ENCODE measurements at regions of chr16 and their contacts with region 1.

Region 1: DNA sequence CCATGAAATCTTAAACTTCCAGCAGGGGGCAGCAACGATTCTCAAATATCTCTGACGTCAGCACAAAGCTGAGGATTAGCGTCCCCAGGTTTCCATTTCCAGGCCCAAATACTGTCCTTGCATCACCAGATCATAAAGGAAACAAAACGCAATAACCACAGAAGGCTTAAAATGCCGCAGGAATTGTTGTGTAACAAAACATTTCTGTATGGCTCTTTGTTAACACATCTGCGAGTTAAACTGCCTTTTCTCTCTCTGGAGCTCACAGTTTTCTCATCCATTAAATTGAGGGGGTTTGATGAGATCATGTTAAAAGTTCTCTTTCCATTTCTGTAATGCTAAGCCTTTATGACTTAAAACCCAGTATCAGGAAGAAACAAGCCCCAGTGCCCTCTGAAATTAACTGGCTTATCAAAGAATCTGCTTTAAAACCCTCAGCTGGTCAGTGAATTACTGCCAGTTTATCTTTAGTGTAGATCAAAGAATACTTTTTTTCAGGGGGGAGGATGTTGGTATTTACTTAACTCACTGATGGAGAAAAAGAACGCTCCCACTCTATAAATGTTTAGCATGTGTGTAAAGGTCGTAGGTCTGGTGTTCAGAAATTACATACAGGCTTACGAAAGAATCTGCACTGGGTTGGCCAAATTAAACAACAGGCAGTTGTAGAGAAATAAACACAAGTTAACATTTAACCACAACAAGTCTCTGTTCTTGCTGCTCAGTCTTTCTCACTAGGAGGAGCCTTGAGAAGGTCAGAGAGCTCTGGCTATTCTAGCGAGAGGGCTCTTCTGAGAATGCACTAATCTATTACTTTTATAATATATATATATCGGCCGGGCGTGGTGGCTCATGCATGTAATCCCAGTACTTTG is 10.6 kb upstream of the TERF2 start:
- DNase-seq: peak; percentile 90
- H3K4me3 ChIP-seq: no peak overlapping the region
- H3K27ac ChIP-seq: peak overlapping the region; percentile 65
- H3K4me1 ChIP-seq: peaks cover 18% of the 10 kb centered on the region
- H3K27me3 ChIP-seq: no peaks in the 10 kb centered on the region
- CTCF ChIP-seq: peak; percentile 55 to 57

Region 2: DNA sequence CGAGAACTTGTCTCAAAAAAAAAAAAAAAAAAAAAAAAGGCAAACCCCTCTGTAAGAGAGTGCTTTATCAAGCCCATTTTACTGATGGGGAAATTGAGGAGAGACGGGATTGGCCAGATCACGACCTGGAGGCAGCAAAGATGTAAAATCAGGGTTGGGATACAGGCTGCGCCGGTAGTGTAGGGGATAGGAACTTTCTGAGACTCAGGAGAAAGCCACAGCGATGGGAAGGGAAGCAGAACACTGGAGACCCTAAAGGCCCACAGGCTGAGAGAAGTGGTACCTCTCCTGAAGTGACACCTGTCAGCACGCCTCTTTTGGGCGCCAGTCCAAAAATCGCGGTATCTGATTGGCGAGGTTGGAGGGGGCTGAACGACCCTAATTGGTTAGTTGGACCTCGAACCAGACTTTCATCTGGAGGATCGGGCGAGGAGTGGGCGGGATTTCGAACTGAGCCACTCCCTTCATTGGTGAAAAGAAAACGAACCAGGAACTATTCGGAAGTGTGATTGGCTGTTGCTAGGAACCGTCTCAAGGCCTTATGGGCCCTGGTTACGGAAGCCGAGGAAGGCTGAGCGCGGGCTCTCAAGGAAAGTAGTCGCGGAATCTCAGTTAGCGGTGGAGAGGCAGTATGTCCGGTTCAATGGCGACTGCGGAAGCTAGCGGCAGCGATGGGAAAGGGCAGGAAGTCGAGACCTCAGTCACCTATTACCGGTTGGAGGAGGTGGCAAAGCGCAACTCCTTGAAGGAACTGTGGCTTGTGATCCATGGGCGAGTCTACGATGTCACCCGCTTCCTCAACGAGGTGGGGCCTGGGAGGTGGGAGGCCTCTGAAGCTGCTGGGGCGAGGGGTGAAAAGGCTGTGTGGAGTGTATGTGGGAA is 27.9 kb after region 1 on chr16 and contains the start of gene CYB5B:
- CTCF ChIA-PET with region 1: no interaction called
- dilution Hi-C with region 1: no loop called
- in situ Hi-C with region 1: no loop called
- intact Hi-C with region 1: loop called (anchors 1 kb)
- DNase-seq: peak; percentile 98
- H3K4me3 ChIP-seq: peak within 1 kb of the TSS; percentile 78 to 100 (median 85)
- H3K27ac ChIP-seq: peak within 1 kb of the TSS; percentile 77
- H3K4me1 ChIP-seq: no peaks in the 10 kb centered on the region
- H3K27me3 ChIP-seq: no peaks in the 10 kb centered on the region
- CTCF ChIP-seq: peak; percentile 1 to 10
- total RNA-seq, gene CYB5B: 96.5 to 174 TPM

Region 3: DNA sequence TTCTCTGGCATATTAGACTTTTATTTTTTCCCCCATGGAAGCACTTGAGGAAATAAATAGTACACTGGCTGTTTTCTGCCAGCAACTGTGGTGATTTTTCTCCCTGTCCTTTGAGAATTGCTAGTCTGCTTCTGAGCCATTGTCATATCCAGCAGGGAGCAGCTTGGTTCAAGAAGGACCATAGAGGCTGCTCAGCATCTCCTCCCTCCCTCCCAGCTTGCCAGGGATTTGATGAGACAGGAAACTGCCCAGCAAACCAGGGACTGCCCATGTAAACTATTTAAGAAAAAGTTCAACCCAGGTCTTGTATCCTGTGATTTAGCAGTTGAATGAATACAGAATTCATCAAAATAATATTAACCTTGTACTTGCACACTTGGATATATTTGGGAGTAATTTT is 67.5 kb after region 1 on chr16:
- CTCF ChIA-PET with region 1: no interaction called
- dilution Hi-C with region 1: loop called (anchors 5 kb)
- in situ Hi-C with region 1: no loop called
- intact Hi-C with region 1: loop called (anchors 5 kb)
- DNase-seq: no peak
- H3K4me3 ChIP-seq: no peak overlapping the region
- H3K27ac ChIP-seq: no peak overlapping the region
- H3K4me1 ChIP-seq: peaks cover 18% of the 10 kb centered on the region
- H3K27me3 ChIP-seq: no peaks in the 10 kb centered on the region
- CTCF ChIP-seq: no peak

Region 4: DNA sequence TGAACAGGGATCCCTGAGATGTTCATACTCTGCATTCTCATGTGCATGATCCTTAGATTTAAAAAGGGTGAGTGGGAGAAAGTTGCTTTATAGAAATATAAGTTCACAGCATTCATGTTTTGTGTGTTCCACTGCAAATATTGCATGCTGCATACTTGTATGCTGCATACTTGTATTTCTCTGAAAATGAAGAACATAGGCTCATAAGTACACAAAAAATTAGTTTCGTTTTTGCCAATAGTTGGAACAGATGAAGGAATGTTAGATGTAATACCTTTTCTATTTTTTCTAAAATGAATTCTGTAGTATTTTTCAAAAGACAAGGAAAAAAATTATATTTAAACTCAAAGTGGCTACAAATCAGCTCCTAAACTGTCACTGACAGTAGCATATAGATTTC is 248.4 kb after region 1 on chr16:
- CTCF ChIA-PET with region 1: no interaction called
- dilution Hi-C with region 1: no loop called
- in situ Hi-C with region 1: no loop called
- intact Hi-C with region 1: loop called (anchors 5 kb)
- DNase-seq: no peak
- H3K4me3 ChIP-seq: no peak overlapping the region
- H3K27ac ChIP-seq: no peak overlapping the region
- H3K4me1 ChIP-seq: no peaks in the 10 kb centered on the region
- H3K27me3 ChIP-seq: no peaks in the 10 kb centered on the region
- CTCF ChIP-seq: no peak

Region 5: DNA sequence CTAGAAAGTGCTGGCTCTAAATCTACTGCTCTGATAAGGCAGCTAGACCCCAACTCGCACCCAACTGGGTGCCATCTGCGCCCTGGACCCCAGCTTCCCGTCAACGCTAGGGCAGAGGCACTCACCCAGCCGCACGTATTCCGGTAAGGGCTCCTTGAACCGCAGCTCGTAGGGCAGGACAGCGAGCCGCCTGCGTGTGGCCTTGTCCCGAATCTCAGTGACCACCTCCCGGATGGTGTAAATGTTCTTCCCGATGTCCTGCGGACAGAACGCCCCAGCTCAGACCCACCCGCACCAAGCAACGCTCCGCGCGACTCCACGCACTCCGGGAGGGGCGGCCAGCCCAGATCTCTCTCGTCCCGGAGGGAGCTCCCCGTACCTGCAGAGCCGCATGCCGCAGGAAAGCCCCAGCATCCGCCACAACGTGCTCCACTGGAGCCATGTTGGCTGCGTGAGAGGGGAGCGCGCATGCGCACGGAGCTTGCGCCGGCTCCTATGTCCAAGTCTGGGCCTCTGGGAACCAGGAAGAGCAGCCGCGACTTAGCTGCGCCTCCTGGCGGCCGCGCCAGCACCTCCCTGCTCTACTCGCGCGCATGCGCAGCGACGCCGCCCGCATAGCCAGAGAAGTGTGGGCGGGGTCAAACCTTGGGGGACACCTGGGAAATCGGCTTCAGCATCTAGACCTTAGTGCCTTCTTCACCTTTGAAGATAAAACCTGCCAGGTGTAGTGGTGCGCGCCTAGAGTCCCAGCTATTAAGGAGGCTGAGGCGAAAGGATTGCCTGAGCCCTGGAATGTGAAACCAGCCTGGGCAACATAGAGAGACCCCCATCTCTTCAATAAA is 358.3 kb after region 1 on chr16 and contains the start of gene NOB1:
- CTCF ChIA-PET with region 1: no interaction called
- dilution Hi-C with region 1: no loop called
- in situ Hi-C with region 1: no loop called
- intact Hi-C with region 1: loop called (anchors 1 kb)
- DNase-seq: peak; percentile 95
- H3K4me3 ChIP-seq: peak within 1 kb of the TSS; percentile 63 to 97 (median 75)
- H3K27ac ChIP-seq: peak within 1 kb of the TSS; percentile 79
- H3K4me1 ChIP-seq: peaks cover 2% of the 10 kb centered on the region
- H3K27me3 ChIP-seq: no peaks in the 10 kb centered on the region
- CTCF ChIP-seq: peak; percentile 86 to 100
- total RNA-seq, gene NOB1: 30.7 to 72.3 TPM